CD8-positive, alpha-beta T cell (primary cell): ENCODE measurements at regions of chr5 and their contacts with region 1.

Region 1: GRCh38 chr5:61461423-61461822 is 129.4 kb downstream of the ZSWIM6 start:
- DNase-seq: no peak
- ATAC-seq: no peak
- H3K4me3 ChIP-seq: no peak overlapping the region
- H3K4me3 Mint-ChIP-seq: no peak overlapping the region
- H3K27ac ChIP-seq: no peak overlapping the region
- H3K27ac Mint-ChIP-seq: no peak overlapping the region
- H3K4me1 ChIP-seq: no peaks in the 10 kb centered on the region
- H3K4me1 Mint-ChIP-seq: peaks cover 22% of the 10 kb centered on the region
- H3K27me3 ChIP-seq: no peaks in the 10 kb centered on the region
- H3K27me3 Mint-ChIP-seq: no peaks in the 10 kb centered on the region
- CTCF ChIP-seq: no peak

Region 2: GRCh38 chr5:61429906-61430305 is 31.5 kb before region 1 on chr5:
- CTCF ChIA-PET with region 1: no interaction called
- POLR2A ChIA-PET with region 1: no interaction called
- intact Hi-C with region 1: loop called in 1 of 2 experiments (anchors 5 kb)
- DNase-seq: no peak
- ATAC-seq: no peak
- H3K4me3 ChIP-seq: no peak overlapping the region
- H3K4me3 Mint-ChIP-seq: no peak overlapping the region
- H3K27ac ChIP-seq: no peak overlapping the region
- H3K27ac Mint-ChIP-seq: no peak overlapping the region
- H3K4me1 ChIP-seq: no peaks in the 10 kb centered on the region
- H3K4me1 Mint-ChIP-seq: peaks cover 29% of the 10 kb centered on the region
- H3K27me3 ChIP-seq: no peaks in the 10 kb centered on the region
- H3K27me3 Mint-ChIP-seq: no peaks in the 10 kb centered on the region
- CTCF ChIP-seq: no peak

Region 3: GRCh38 chr5:61440596-61440995 is 20.8 kb before region 1 on chr5:
- CTCF ChIA-PET with region 1: no interaction called
- POLR2A ChIA-PET with region 1: no interaction called
- intact Hi-C with region 1: no loop called
- DNase-seq: no peak
- ATAC-seq: no peak
- H3K4me3 ChIP-seq: no peak overlapping the region
- H3K4me3 Mint-ChIP-seq: no peak overlapping the region
- H3K27ac ChIP-seq: no peak overlapping the region
- H3K27ac Mint-ChIP-seq: no peak overlapping the region
- H3K4me1 ChIP-seq: no peaks in the 10 kb centered on the region
- H3K4me1 Mint-ChIP-seq: peaks cover 8% of the 10 kb centered on the region
- H3K27me3 ChIP-seq: no peaks in the 10 kb centered on the region
- H3K27me3 Mint-ChIP-seq: no peaks in the 10 kb centered on the region
- CTCF ChIP-seq: no peak